MCF 10A (cell line): ENCODE measurements at regions of chrX and their contacts with region 1.

Region 1: GRCh38 chrX:57918750-57919436 is 8.6 kb upstream of the ZXDA start:
- DNase-seq: peak; percentile 55
- H3K4me3 Mint-ChIP-seq: no peak overlapping the region
- H3K27ac Mint-ChIP-seq: no peak overlapping the region
- H3K4me1 Mint-ChIP-seq: no peaks in the 10 kb centered on the region
- H3K27me3 Mint-ChIP-seq: peaks cover 45% of the 10 kb centered on the region
- CTCF ChIP-seq: peak; percentile 37

Region 2: GRCh38 chrX:56802921-56803849 is 1115.7 kb before region 1 on chrX:
- CTCF ChIA-PET with region 1: no interaction called
- POLR2A ChIA-PET with region 1: no interaction called
- intact Hi-C with region 1: loop called (anchors 1 kb)
- DNase-seq: peak; percentile 77
- H3K4me3 Mint-ChIP-seq: peak overlapping the region; percentile 78
- H3K27ac Mint-ChIP-seq: no peak overlapping the region
- H3K4me1 Mint-ChIP-seq: peaks cover 13% of the 10 kb centered on the region
- H3K27me3 Mint-ChIP-seq: peaks cover 36% of the 10 kb centered on the region
- CTCF ChIP-seq: peak; percentile 70

Region 3: DNA sequence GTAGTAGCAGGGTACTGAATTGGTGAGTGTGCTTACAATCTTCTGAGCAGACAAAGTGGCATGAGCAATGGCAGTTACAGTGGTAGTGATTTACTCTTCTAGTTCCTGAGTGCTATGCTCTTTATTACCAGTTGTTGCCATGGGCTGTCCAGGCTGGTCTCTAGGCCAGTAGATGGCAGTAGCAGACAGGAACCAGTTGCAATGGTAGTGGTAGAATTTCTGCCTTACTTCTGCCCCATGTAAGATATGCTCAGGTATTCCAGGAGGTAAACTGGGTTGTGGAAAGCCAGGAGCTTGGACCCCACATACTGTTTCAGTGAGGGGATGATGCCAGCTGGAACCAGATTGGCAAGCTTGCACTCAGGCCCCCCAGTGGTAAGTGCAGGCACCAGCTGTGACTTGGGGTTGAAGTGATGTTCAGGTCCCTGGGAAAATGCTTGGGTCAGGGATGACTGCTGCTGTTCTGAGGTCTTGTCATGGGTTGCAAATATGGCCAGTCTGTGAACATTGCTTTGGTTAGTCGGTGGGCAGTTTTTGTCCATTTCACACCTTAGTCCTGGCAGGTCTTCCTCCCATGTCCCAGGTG is 390.1 kb before region 1 on chrX:
- CTCF ChIA-PET with region 1: no interaction called
- POLR2A ChIA-PET with region 1: no interaction called
- intact Hi-C with region 1: loop called (anchors 5 kb)
- DNase-seq: peak; percentile 42
- H3K4me3 Mint-ChIP-seq: no peak overlapping the region
- H3K27ac Mint-ChIP-seq: no peak overlapping the region
- H3K4me1 Mint-ChIP-seq: no peaks in the 10 kb centered on the region
- H3K27me3 Mint-ChIP-seq: peaks cover 64% of the 10 kb centered on the region
- CTCF ChIP-seq: peak; percentile 49

Region 4: DNA sequence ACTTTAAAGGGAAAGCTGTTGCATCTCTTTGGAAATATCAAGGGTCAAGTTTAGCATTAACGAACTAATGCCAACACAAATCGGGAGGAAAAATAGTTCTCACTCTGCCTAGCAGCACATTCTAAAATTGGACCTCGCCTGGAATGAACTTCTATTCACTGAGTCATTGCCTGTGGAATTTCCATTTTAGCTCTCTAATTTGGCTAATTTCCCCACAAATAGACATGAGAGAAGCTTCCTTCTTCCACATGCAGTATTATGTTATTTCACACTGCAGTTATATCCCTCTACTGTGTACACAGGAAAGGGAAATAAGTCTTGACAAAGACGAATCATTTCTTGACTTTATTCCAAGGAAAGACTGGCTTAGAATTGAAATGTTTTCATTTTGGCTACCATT is 17.9 kb before region 1 on chrX:
- CTCF ChIA-PET with region 1: no interaction called
- POLR2A ChIA-PET with region 1: no interaction called
- intact Hi-C with region 1: no loop called
- DNase-seq: peak; percentile 32
- H3K4me3 Mint-ChIP-seq: no peak overlapping the region
- H3K27ac Mint-ChIP-seq: no peak overlapping the region
- H3K4me1 Mint-ChIP-seq: peaks cover under 1% of the 10 kb centered on the region
- H3K27me3 Mint-ChIP-seq: peaks cover 13% of the 10 kb centered on the region
- CTCF ChIP-seq: no peak

Region 5: DNA sequence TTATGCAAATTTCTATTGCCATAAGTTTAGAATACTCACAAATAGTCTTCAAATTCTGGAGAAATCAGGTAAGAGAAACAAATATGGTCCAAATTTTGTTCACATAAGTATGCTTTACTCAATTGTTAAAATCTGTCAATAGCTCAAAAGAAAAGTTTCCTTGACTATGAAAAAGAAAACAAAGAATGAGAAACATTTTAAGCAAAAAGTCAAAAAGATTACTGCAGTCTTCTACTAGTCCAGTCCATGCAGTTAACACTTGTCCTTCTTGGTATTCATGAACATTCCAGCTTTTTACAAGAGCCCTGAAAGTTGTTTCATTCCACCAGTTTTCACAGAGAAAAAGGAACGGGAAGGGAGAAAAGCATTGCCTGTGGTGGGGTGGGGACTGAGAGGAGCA is 46.1 kb after region 1 on chrX:
- CTCF ChIA-PET with region 1: no interaction called
- POLR2A ChIA-PET with region 1: no interaction called
- intact Hi-C with region 1: no loop called
- DNase-seq: no peak
- H3K4me3 Mint-ChIP-seq: no peak overlapping the region
- H3K27ac Mint-ChIP-seq: no peak overlapping the region
- H3K4me1 Mint-ChIP-seq: no peaks in the 10 kb centered on the region
- H3K27me3 Mint-ChIP-seq: no peaks in the 10 kb centered on the region
- CTCF ChIP-seq: no peak

Region 6: GRCh38 chrX:57985951-57986350 is 67.1 kb after region 1 on chrX:
- CTCF ChIA-PET with region 1: no interaction called
- POLR2A ChIA-PET with region 1: no interaction called
- intact Hi-C with region 1: no loop called
- DNase-seq: no peak
- H3K4me3 Mint-ChIP-seq: no peak overlapping the region
- H3K27ac Mint-ChIP-seq: no peak overlapping the region
- H3K4me1 Mint-ChIP-seq: no peaks in the 10 kb centered on the region
- H3K27me3 Mint-ChIP-seq: no peaks in the 10 kb centered on the region
- CTCF ChIP-seq: no peak